Common myeloid progenitor, CD34-positive (primary cell): ENCODE measurements at regions of chr7 and their contacts with region 1.

Region 1: GRCh38 chr7:142811154-142811737 is 40.5 kb downstream of the PRSS2 start:
- DNase-seq: peak; percentile 59 to 69 (median 68)
- H3K4me3 ChIP-seq: no peak overlapping the region
- H3K27ac ChIP-seq: no peak overlapping the region
- H3K4me1 ChIP-seq: peaks cover 41 to 45% (median 42%) of the 10 kb centered on the region in 4 experiments
- H3K27me3 ChIP-seq: no peaks in the 10 kb centered on the region

Region 2: GRCh38 chr7:142603870-142604448 is 207.3 kb before region 1 on chr7:
- CTCF ChIA-PET with region 1: interaction called, 75 read pairs
- POLR2A ChIA-PET with region 1: no interaction called
- DNase-seq: peak; percentile 68 to 87 (median 83)
- H3K4me3 ChIP-seq: no peak overlapping the region
- H3K27ac ChIP-seq: no peak overlapping the region
- H3K4me1 ChIP-seq: peaks cover 0 to 29% (median 22%) of the 10 kb centered on the region in 4 experiments
- H3K27me3 ChIP-seq: no peaks in the 10 kb centered on the region

Region 3: GRCh38 chr7:142632291-142633134 is 178.7 kb before region 1 on chr7:
- CTCF ChIA-PET with region 1: interaction called, 167 read pairs
- POLR2A ChIA-PET with region 1: interaction called, 4 read pairs
- DNase-seq: peak; percentile 81 to 88 (median 87)
- H3K4me3 ChIP-seq: peak overlapping the region in 1 of 7 experiments; percentile 11
- H3K27ac ChIP-seq: no peak overlapping the region
- H3K4me1 ChIP-seq: peaks cover 0 to 25% (median 13%) of the 10 kb centered on the region in 4 experiments
- H3K27me3 ChIP-seq: no peaks in the 10 kb centered on the region

Region 4: GRCh38 chr7:142669074-142669654 is 142.1 kb before region 1 on chr7:
- CTCF ChIA-PET with region 1: interaction called, 17 read pairs
- POLR2A ChIA-PET with region 1: no interaction called
- DNase-seq: peak; percentile 31 to 50 (median 49)
- H3K4me3 ChIP-seq: no peak overlapping the region
- H3K27ac ChIP-seq: no peak overlapping the region
- H3K4me1 ChIP-seq: peaks cover 17 to 43% (median 34%) of the 10 kb centered on the region in 4 experiments
- H3K27me3 ChIP-seq: no peaks in the 10 kb centered on the region

Region 5: GRCh38 chr7:142782922-142783900 is 28.0 kb before region 1 on chr7:
- CTCF ChIA-PET with region 1: interaction called, 679 read pairs
- POLR2A ChIA-PET with region 1: interaction called, 9 read pairs
- DNase-seq: peak; percentile 95 to 98 (median 96)
- H3K4me3 ChIP-seq: peak overlapping the region in 6 of 7 experiments; percentile 3 to 69 (median 56)
- H3K27ac ChIP-seq: peak overlapping the region in 1 of 2 experiments; percentile 49
- H3K4me1 ChIP-seq: peaks cover 0 to 22% (median 13%) of the 10 kb centered on the region in 4 experiments
- H3K27me3 ChIP-seq: no peaks in the 10 kb centered on the region

Region 6: GRCh38 chr7:142796608-142797385 is 14.4 kb before region 1 on chr7:
- CTCF ChIA-PET with region 1: interaction called, 679 read pairs
- POLR2A ChIA-PET with region 1: interaction called, 96 read pairs
- DNase-seq: peak in 2 of 3 donors; percentile 40 to 58
- H3K4me3 ChIP-seq: peak overlapping the region; percentile 52 to 89 (median 79)
- H3K27ac ChIP-seq: peak overlapping the region; percentile 80 to 85
- H3K4me1 ChIP-seq: peaks cover 27 to 66% (median 52%) of the 10 kb centered on the region in 4 experiments
- H3K27me3 ChIP-seq: peaks cover 0 to 6% (median 0%) of the 10 kb centered on the region in 5 experiments